PC-9 (cell line): ENCODE measurements at regions of chr5 and their contacts with region 1.

Region 1: DNA sequence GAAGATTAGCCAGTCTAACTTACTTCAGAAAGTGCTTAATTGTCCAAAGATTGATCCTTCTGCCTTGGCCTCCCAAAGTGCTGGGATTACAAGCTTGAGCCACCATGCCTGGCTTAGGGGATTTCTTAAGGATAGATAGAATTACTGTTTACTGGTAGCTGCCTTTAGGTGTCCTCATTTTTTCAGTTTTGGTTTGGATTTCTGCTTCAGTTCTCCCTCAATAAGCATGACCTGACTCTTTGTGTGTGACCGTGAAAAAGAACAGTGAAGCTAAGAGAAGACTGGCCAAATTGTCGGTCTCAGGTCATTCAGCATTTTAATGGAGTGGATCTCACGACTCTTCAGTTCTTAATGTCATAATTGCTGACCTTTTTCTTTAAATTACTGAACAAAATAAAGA is 22.9 kb upstream of the CMYA5 start:
- DNase-seq: no peak
- H3K4me3 ChIP-seq: no peak overlapping the region
- H3K27ac ChIP-seq: no peak overlapping the region; the same call in 1 of the 2 replicates
- H3K4me1 ChIP-seq: no peaks in the 10 kb centered on the region
- H3K27me3 ChIP-seq: no peaks in the 10 kb centered on the region
- CTCF ChIP-seq: no peak

Region 2: GRCh38 chr5:79612667-79613198 is 54.0 kb before region 1 on chr5:
- CTCF ChIA-PET with region 1: no interaction called
- POLR2A ChIA-PET with region 1: interaction called, 11 read pairs
- intact Hi-C with region 1: no loop called
- DNase-seq: no peak
- H3K4me3 ChIP-seq: peak overlapping the region; percentile 83
- H3K27ac ChIP-seq: peak overlapping the region; percentile 83
- H3K4me1 ChIP-seq: peaks cover 14% of the 10 kb centered on the region
- H3K27me3 ChIP-seq: no peaks in the 10 kb centered on the region
- CTCF ChIP-seq: no peak

Region 3: GRCh38 chr5:79697222-79698170 is 30.7 kb after region 1 on chr5:
- CTCF ChIA-PET with region 1: no interaction called
- POLR2A ChIA-PET with region 1: interaction called, 17 read pairs
- intact Hi-C with region 1: no loop called
- DNase-seq: peak in 1 of 2 experiments; percentile 84
- H3K4me3 ChIP-seq: no peak overlapping the region
- H3K27ac ChIP-seq: peak overlapping the region; percentile 34; the same call in 1 of the 2 replicates
- H3K4me1 ChIP-seq: peaks cover 42% of the 10 kb centered on the region
- H3K27me3 ChIP-seq: no peaks in the 10 kb centered on the region
- CTCF ChIP-seq: no peak